Prostate gland (tissue), 2 donors: ENCODE measurements at regions of chrX and their contacts with region 1.

Region 1: GRCh38 chrX:2819345-2820135 is 9.2 kb upstream of the GYG2 start:
- DNase-seq: no peak
- H3K4me3 ChIP-seq: no peak overlapping the region
- H3K27ac ChIP-seq: no peak overlapping the region
- H3K4me1 ChIP-seq: no peaks in the 10 kb centered on the region
- H3K27me3 ChIP-seq: no peaks in the 10 kb centered on the region
- CTCF ChIP-seq: peak in 2 of 4 experiments; percentile 18 to 38
- POLR2A ChIP-seq: no peak

Region 2: GRCh38 chrX:2299871-2300270 is 519.7 kb before region 1 on chrX:
- intact Hi-C with region 1: no loop called
- DNase-seq: no peak
- H3K4me3 ChIP-seq: no peak overlapping the region
- H3K27ac ChIP-seq: no peak overlapping the region
- H3K4me1 ChIP-seq: no peaks in the 10 kb centered on the region
- H3K27me3 ChIP-seq: no peaks in the 10 kb centered on the region
- CTCF ChIP-seq: no peak
- POLR2A ChIP-seq: no peak

Region 3: DNA sequence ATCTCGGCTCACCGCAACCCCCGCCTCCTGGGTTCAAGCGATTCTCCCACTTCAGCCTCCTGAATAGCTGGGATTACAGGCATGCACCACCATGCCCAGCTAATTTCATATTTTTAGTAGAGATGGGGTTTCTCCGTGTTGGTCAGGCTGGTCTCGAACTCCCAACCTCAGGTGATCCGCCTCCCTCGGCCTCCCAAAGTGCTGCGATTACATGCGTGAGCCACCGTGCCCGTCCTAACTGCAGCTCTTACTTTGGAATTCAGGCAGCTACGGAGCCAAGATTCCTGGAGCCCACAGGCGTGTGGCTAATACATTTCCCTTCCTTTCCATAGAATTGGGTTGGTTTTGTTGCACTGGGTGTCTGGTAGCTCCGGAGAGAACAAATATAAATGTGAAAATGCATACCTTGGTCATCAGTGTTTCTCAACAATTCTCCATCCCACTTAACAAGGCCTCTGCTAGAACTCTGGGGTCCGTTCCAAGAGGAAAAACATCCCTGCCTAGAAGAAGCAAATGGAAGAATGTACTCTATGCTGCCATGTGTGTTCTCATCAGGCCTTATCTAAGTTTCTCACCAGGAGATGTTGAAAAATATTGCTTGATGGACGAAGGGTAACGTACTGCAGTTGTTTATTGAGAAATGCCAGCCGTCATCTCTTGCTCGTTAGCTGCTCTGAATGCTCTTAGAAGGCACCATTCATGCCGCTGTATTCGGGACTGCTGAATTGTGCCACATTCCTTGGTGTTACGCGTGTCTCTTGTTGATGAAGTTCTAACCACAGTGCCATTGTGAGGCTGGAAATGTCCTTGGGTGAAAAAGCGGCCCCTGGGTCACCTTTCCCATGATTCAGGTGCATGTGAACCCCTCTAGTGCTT is 179.0 kb before region 1 on chrX:
- intact Hi-C with region 1: loop called (anchors 10 kb)
- DNase-seq: no peak
- H3K4me3 ChIP-seq: no peak overlapping the region
- H3K27ac ChIP-seq: no peak overlapping the region
- H3K4me1 ChIP-seq: no peaks in the 10 kb centered on the region
- H3K27me3 ChIP-seq: no peaks in the 10 kb centered on the region
- CTCF ChIP-seq: no peak
- POLR2A ChIP-seq: no peak